Activated naive CD4-positive, alpha-beta T cell treated with anti-CD3 and anti-CD28 coated beads for 36 hours (primary cell): ENCODE measurements at regions of chr10 and their contacts with region 1.

Region 1: DNA sequence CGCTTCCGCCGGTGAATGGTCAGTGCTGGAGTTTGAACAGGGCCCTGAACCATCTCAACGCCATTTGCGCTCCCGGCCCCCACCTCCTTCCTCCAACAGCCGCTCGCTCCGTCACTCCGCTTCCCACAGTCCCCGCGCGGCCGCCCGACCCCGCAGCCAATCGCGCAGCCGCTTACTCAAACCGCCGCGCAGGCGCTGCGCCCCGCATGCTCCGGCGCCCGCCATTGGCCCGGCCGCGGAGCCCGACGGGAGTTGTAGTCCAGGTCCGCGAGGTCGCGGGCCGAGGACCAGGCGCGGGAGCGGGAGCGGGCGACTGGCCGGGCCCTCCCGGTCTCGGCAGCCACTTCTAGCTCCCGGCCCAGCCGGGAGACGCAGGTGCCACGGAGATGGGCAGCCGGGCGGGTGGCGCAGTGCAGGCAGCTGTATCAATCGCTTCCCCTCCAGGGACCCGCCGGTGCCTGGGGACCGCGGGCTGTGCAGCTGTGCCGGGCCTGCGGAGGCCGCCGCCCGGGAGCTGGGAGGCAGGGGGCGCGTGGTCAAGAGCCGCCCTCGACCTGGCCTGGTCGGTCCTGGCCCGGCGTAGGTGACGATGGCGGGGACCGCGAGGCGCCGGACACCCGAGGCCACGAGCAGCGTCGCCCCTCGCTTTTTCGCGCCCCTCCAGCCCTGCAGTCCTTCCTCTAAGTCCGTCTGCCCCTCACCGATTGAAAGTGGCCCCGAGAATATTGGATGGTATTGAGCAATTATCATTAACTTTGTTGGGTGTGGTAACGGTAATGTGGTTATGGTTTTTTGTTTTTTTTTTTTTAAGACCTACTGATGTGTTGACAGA is at the start of gene WAPL:
- DNase-seq: peak; percentile 95
- H3K4me3 Mint-ChIP-seq: peak within 1 kb of the TSS; percentile 99
- H3K27ac Mint-ChIP-seq: peak within 1 kb of the TSS; percentile 89
- H3K4me1 Mint-ChIP-seq: peaks cover 57% of the 10 kb centered on the region
- H3K27me3 Mint-ChIP-seq: no peaks in the 10 kb centered on the region
- total RNA-seq, gene WAPL: 30.2 to 33.5 TPM

Region 2: GRCh38 chr10:86411281-86411841 is 110.5 kb before region 1 on chr10:
- CTCF ChIA-PET with region 1: no interaction called
- intact Hi-C with region 1: loop called (anchors 2 kb)
- DNase-seq: peak; percentile 68
- H3K4me3 Mint-ChIP-seq: peak overlapping the region; percentile 60
- H3K27ac Mint-ChIP-seq: peak overlapping the region; percentile 85
- H3K4me1 Mint-ChIP-seq: peaks cover 45% of the 10 kb centered on the region
- H3K27me3 Mint-ChIP-seq: no peaks in the 10 kb centered on the region

Region 3: GRCh38 chr10:86535057-86535882 is 13.4 kb after region 1 on chr10:
- CTCF ChIA-PET with region 1: no interaction called
- intact Hi-C with region 1: loop called (anchors 2 kb)
- DNase-seq: peak; percentile 34
- H3K4me3 Mint-ChIP-seq: peak overlapping the region; percentile 70
- H3K27ac Mint-ChIP-seq: peak overlapping the region; percentile 66
- H3K4me1 Mint-ChIP-seq: peaks cover 26% of the 10 kb centered on the region
- H3K27me3 Mint-ChIP-seq: no peaks in the 10 kb centered on the region

Region 4: GRCh38 chr10:86585037-86585725 is 63.3 kb after region 1 on chr10:
- CTCF ChIA-PET with region 1: interaction called, 6 read pairs
- intact Hi-C with region 1: loop called (anchors 1 kb)
- DNase-seq: peak; percentile 79
- H3K4me3 Mint-ChIP-seq: no peak overlapping the region
- H3K27ac Mint-ChIP-seq: no peak overlapping the region
- H3K4me1 Mint-ChIP-seq: no peaks in the 10 kb centered on the region
- H3K27me3 Mint-ChIP-seq: no peaks in the 10 kb centered on the region

Region 5: DNA sequence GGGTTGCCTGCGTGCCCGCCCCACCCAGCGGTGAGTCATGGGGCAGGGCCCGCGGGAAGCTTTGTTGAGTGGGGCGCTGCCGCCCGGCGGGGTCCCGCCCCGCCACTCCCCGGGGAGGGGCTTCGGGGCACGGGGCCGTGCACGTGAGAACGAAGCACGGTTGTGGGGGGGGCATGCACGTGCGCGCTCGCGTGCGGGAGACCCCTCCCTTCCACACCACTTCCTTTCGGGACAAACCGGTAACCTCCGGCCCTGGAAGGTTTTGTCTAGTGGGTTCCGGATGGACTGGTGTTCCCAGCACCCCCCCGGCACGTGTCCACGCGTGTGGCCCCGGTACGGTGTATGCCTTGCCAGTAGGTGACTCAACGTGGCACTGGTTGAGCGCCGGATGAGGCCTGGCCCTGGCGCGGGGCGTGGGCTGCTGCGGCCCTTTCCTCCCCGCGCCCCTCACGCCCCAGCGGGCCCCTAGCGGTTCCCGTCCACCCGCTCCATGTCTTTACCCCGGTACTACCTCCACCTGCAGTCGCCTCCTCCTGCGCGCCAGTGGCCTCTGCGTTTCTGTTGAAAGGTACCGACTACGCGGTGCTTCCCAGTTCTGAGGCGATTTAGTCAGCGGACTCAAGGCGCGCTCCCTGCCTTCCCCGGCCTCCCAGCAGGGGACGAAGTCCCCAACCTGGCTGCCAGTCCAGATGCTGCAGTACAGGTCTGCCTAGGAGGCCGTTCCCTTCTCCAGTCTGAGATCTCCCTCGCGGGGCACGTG is 449.5 kb after region 1 on chr10:
- CTCF ChIA-PET with region 1: no interaction called
- intact Hi-C with region 1: loop called (anchors 5 kb)
- DNase-seq: peak; percentile 83
- H3K4me3 Mint-ChIP-seq: peak overlapping the region; percentile 72
- H3K27ac Mint-ChIP-seq: peak overlapping the region; percentile 56
- H3K4me1 Mint-ChIP-seq: peaks cover 35% of the 10 kb centered on the region
- H3K27me3 Mint-ChIP-seq: no peaks in the 10 kb centered on the region